Calu3 (cell line): ENCODE measurements at regions of chr6 and their contacts with region 1.

Region 1: DNA sequence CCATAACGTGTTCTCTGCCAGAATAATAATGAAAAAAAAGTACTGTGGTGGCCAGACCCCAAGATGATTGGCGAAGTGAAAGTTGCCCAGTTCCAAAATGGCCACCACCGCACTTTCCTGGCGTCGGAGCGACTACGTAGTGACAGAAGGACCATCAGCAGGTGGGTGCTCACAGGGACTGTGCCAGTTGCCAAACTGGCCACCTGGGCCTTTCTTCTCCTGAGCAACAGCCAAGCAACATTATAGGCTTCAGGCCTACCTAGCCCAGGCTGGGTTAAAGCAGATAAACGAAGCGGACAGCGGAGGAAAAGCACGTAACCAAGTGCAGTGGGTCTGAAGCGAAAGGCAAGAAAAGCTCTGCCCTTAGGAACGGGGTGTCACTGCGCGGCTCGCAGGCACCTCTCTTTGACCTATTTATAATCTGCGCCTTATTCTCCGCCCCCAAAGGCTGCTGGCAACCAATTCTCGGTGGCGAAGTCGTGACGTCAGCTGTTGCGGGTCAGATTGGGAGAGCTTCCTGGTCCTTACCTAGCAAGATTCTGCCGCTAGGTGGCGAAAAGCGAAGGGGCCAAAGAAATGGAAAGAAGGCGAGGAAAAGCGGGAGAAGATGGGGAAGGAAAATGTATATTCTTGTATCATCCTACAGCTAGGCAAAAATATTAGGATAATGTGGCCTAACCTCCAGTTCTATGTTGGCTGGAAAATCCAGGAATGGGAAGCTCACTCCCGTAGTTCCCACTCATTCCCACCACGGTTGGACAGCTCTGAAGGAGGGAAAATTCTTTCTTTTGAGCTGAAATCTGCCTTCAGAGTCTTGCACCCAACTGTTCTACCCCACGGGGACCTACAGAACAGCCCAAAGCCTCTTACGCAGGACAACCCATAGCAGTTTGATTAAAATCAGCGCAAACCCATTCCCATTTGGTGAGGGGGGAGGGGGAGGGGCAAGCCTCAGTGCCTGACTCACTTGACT is 6.9 kb upstream of the MOG start:
- DNase-seq: peak; percentile 98
- H3K4me3 Mint-ChIP-seq: peak overlapping the region; percentile 77
- H3K27ac Mint-ChIP-seq: peak overlapping the region; percentile 92
- H3K4me1 Mint-ChIP-seq: no peaks in the 10 kb centered on the region
- H3K27me3 Mint-ChIP-seq: no peaks in the 10 kb centered on the region
- CTCF ChIP-seq: peak; percentile 90

Region 2: GRCh38 chr6:29661071-29661470 is 11.1 kb after region 1 on chr6:
- CTCF ChIA-PET with region 1: interaction called, 13 read pairs
- intact Hi-C with region 1: no loop called
- DNase-seq: no peak
- H3K4me3 Mint-ChIP-seq: no peak overlapping the region
- H3K27ac Mint-ChIP-seq: no peak overlapping the region
- H3K4me1 Mint-ChIP-seq: no peaks in the 10 kb centered on the region
- H3K27me3 Mint-ChIP-seq: peaks cover 1% of the 10 kb centered on the region
- CTCF ChIP-seq: no peak

Region 3: DNA sequence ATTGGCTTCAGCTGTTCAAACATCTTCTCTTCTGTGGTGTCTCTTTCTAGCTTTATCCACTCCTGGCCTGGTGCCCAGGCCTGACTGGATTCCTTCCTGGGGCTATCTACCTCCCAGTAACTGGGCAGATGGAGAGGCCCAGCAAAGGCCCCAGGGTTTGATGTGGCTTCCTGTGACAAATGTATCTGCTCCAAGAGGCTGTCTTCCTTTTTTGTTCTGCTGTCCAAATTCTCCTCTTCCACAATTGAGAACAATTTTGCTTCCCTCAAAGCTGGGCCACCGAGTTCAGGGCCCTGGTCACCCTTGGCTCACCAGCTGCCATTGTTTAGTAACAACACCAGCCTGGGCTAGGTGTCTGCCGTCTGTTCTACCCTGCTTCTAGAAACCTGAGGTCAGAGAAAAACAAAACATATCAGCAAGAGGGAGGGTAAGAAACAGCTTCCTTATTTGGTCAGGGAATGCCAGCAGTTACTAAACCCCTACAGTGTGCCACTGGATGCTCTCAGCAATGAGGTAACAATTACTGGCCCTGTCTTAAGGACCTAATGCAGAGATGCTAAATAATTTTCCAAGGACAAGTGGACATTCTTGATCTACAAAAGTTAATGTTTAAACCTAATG is 27.1 kb after region 1 on chr6:
- CTCF ChIA-PET with region 1: interaction called, 28 read pairs
- intact Hi-C with region 1: no loop called
- DNase-seq: peak; percentile 27
- H3K4me3 Mint-ChIP-seq: no peak overlapping the region
- H3K27ac Mint-ChIP-seq: peak overlapping the region; percentile 79
- H3K4me1 Mint-ChIP-seq: peaks cover 34% of the 10 kb centered on the region
- H3K27me3 Mint-ChIP-seq: peaks cover 8% of the 10 kb centered on the region
- CTCF ChIP-seq: no peak

Region 4: GRCh38 chr6:29696155-29697125 is 46.5 kb after region 1 on chr6:
- CTCF ChIA-PET with region 1: interaction called, 100 read pairs
- intact Hi-C with region 1: loop called (anchors 1 kb)
- DNase-seq: peak; percentile 64
- H3K4me3 Mint-ChIP-seq: no peak overlapping the region
- H3K27ac Mint-ChIP-seq: no peak overlapping the region
- H3K4me1 Mint-ChIP-seq: peaks cover 8% of the 10 kb centered on the region
- H3K27me3 Mint-ChIP-seq: no peaks in the 10 kb centered on the region
- CTCF ChIP-seq: peak; percentile 83